PC-9 (cell line): ENCODE measurements at regions of chr1 and their contacts with region 1.

Region 1: GRCh38 chr1:184352776-184353175 is 34.1 kb upstream of the C1orf21 start:
- DNase-seq: no peak
- H3K4me3 ChIP-seq: no peak overlapping the region
- H3K27ac ChIP-seq: no peak overlapping the region
- H3K4me1 ChIP-seq: no peaks in the 10 kb centered on the region
- H3K27me3 ChIP-seq: no peaks in the 10 kb centered on the region
- CTCF ChIP-seq: no peak

Region 2: DNA sequence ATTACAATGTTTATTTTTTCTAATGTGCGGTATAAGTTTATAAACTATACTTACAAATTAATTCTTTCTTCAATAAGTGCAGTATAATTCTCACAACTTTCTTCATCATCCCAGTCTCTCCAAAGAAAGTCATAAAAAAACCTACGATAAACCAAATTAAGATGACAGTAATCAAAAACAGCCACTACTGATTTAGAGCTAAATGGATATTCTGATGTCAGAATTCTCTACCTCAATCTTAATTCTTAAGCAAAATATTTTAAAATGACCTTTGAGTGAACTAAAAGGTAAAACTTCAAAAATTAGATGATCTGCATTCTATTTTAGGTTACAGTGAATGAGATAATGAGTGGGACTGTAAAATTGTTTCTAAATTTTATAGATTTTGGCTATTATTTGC is 1413.4 kb before region 1 on chr1:
- CTCF ChIA-PET with region 1: no interaction called
- POLR2A ChIA-PET with region 1: interaction called, 55 read pairs
- intact Hi-C with region 1: no loop called
- DNase-seq: no peak
- H3K4me3 ChIP-seq: no peak overlapping the region
- H3K27ac ChIP-seq: no peak overlapping the region
- H3K4me1 ChIP-seq: no peaks in the 10 kb centered on the region
- H3K27me3 ChIP-seq: no peaks in the 10 kb centered on the region
- CTCF ChIP-seq: no peak

Region 3: DNA sequence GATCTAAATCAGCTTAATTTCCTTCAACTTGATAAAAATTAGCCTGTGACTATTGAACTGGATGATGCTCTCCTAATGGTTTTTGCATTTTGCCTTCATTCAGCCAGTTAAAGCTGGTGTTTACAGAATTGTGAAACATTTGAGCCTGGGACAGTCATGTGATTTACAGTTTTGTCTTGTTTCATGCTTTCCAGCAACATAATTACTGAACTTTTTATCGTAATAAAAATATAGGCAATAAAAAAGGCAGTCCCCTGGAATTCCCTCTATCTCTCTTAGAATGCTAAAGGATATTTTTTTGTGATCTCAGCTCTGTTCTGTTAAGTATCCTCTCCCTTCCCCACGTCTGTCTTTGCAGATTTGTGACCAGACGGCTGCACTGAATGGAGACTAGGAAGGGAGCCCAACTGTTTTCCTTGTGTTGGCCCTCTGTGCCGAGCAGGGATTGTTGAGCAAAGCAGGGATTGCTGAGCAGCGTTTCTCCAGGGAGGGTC is 618.2 kb before region 1 on chr1:
- CTCF ChIA-PET with region 1: no interaction called
- POLR2A ChIA-PET with region 1: no interaction called
- intact Hi-C with region 1: no loop called
- DNase-seq: no peak
- H3K4me3 ChIP-seq: no peak overlapping the region
- H3K27ac ChIP-seq: peak overlapping the region; percentile 40; the same call in 1 of the 2 replicates
- H3K4me1 ChIP-seq: peaks cover 30% of the 10 kb centered on the region
- H3K27me3 ChIP-seq: no peaks in the 10 kb centered on the region
- CTCF ChIP-seq: no peak

Region 4: DNA sequence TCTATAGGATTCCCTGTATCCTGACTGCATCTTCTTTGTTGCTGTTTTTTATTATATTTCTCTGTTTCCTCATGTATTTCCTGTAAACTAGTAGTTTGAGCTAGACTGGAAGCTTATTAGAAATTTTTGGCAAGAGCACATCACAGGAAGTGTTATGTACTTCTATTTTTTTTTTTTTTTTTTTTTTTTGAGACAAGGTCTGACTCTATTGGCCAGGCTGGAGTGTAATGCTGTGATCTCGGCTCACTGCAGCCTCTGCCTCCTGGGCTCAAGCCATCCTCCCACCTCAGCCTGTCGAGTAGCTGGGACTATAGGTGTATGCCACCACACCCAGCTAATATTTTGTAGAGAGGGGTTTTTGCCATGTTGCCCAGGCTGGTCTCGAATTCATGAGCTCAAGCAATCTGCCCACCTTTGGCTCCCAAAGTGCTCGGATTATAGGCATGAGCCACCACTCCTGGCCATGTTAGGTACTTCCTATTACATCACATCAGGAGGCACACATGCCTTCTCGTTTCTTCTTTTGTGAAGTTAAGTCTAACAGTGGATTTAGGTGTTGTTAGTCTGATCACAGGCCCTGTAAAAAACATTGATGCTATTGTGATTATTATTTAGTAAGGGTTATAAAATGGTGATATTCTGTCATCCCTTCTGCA is 46.5 kb after region 1 on chr1:
- CTCF ChIA-PET with region 1: no interaction called
- POLR2A ChIA-PET with region 1: no interaction called
- intact Hi-C with region 1: no loop called
- DNase-seq: no peak
- H3K4me3 ChIP-seq: no peak overlapping the region
- H3K27ac ChIP-seq: no peak overlapping the region
- H3K4me1 ChIP-seq: no peaks in the 10 kb centered on the region
- H3K27me3 ChIP-seq: no peaks in the 10 kb centered on the region
- CTCF ChIP-seq: no peak